Activated CD8-positive, alpha-beta T cell treated with anti-CD3 and anti-CD28 coated beads for 36 hours (primary cell): ENCODE measurements at regions of chr3 and their contacts with region 1.

Region 1: DNA sequence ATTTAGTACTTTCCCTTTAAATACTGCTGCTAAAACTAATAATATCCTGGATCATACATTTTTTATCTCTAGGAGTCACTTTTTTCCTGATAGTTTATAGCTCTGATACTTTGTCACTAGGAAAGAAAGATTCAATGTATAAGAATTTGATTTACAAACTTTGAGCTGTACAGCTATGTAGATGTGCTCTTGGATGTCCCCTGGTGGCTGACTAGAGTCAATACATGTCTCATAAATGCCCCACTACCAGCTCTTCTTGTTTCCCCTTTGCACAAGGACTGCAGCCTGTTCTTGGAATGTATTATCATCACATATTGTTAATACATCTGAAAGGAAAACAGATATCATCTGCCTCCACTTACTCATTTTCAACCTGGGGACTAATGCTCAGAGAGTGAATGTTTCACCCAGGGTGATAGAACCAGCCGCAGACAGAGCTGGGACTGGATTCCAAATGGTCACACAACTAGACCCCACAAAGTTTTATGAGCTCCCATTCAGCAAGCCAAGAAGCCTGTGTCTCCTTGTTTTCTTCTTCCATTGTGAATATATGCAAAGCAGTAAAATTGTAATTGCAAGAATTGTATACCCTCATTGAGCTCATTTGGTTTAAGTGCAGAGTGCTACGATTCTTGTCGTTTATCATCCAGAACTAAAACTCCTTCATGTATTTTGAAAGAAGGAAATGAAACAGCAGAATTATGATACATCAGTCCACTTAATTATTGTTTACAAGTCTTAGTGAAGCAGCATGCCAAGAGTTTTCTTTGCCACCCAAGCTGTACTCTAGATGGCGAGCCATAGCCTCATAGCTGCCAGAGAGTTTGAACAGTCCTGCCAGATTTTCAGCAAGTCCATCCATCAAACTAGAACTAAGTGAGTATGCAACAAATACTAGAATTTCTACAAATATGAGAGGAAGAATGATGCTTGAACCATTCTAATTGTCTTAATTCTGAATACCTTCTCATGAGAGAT is 261.6 kb upstream of the LMCD1 start:
- DNase-seq: peak; percentile 28
- ATAC-seq: peak; percentile 74
- H3K4me3 Mint-ChIP-seq: no peak overlapping the region
- H3K27ac Mint-ChIP-seq: no peak overlapping the region
- H3K4me1 Mint-ChIP-seq: no peaks in the 10 kb centered on the region
- H3K27me3 Mint-ChIP-seq: no peaks in the 10 kb centered on the region
- CTCF ChIP-seq: peak; percentile 78

Region 2: DNA sequence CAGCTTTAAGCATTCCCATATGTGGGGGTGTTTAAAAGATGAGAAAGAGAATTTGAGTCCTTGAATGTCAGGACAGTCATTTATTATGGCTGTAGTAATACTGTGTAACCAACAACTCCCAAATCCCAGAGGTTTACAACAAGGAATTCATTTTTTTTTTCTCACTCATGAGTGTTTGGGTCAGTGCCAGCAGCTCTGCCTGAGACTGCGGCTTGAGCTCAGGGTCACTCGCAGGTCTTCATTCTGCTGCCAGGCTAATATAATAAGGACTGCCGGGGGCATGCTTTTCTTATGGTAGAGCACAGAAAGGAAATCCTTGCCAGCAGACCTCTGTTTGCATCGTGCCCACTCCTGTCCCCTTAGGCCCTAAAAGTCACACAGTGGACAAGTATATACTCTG is 16.2 kb before region 1 on chr3:
- CTCF ChIA-PET with region 1: interaction called, 14 read pairs
- POLR2A ChIA-PET with region 1: no interaction called
- intact Hi-C with region 1: no loop called
- DNase-seq: no peak
- ATAC-seq: no peak
- H3K4me3 Mint-ChIP-seq: no peak overlapping the region
- H3K27ac Mint-ChIP-seq: no peak overlapping the region
- H3K4me1 Mint-ChIP-seq: no peaks in the 10 kb centered on the region
- H3K27me3 Mint-ChIP-seq: peaks cover 2% of the 10 kb centered on the region
- CTCF ChIP-seq: no peak

Region 3: DNA sequence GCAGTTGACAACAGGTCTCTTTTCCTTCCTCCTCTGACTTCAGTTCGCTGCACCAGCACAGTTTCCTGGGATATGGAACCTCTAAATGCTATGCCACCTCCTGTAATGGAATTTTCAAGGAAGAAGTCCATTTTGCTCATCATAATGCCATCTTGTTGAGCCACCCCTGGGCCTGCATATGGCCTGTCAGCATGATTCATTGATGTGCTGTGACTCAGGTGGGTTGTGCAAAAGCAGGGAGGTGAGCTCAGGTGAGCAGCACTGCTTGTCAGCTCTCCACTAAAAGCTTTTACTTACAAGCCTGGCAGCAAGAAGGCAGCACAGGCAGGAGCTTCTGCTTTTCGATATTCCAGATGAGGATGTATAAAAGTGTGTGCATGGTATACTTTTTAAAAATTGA is 14.5 kb after region 1 on chr3:
- CTCF ChIA-PET with region 1: interaction called, 12 read pairs
- POLR2A ChIA-PET with region 1: no interaction called
- intact Hi-C with region 1: no loop called
- DNase-seq: no peak
- ATAC-seq: no peak
- H3K4me3 Mint-ChIP-seq: no peak overlapping the region
- H3K27ac Mint-ChIP-seq: no peak overlapping the region
- H3K4me1 Mint-ChIP-seq: no peaks in the 10 kb centered on the region
- H3K27me3 Mint-ChIP-seq: peaks cover 4% of the 10 kb centered on the region
- CTCF ChIP-seq: no peak

Region 4: GRCh38 chr3:8301728-8302462 is 61.9 kb after region 1 on chr3:
- CTCF ChIA-PET with region 1: interaction called, 10 read pairs
- POLR2A ChIA-PET with region 1: interaction called, 4 read pairs
- intact Hi-C with region 1: no loop called
- DNase-seq: peak; percentile 3
- ATAC-seq: no peak
- H3K4me3 Mint-ChIP-seq: no peak overlapping the region
- H3K27ac Mint-ChIP-seq: no peak overlapping the region
- H3K4me1 Mint-ChIP-seq: peaks cover 4% of the 10 kb centered on the region
- H3K27me3 Mint-ChIP-seq: no peaks in the 10 kb centered on the region
- CTCF ChIP-seq: peak; percentile 65